ENCODE measurements at regions of chr22 and their contacts with region 1.

Region 1: GRCh38 chr22:35971456-35972119 is 57.0 kb downstream of the RBFOX2 start:
- DNase-seq: peak; percentile 96
- H3K4me3 ChIP-seq: peak overlapping the region; percentile 17
- H3K27ac ChIP-seq: peak overlapping the region; percentile 93
- H3K4me1 ChIP-seq: peaks cover 93% of the 10 kb centered on the region
- H3K27me3 ChIP-seq: no peaks in the 10 kb centered on the region
- CTCF ChIP-seq: no peak

Region 2: DNA sequence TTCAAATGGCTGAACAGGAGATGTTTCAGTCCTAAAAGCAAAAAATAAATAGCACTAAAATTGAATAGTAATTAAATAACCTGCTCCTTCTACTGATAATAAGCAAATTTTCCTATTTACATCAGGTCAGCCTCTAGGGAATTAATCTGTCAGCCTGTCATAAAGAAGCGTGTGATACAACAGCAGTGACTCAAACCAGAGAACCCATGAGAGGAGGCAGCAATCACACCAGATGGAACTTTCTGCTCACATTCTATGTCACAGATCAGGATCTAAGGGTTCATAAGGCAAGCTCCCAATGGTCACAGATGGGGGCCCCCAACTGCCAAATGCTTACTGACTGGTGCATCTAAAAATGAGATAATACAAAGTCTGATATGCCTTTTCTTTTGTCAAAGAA is 15.9 kb after region 1 on chr22:
- CTCF ChIA-PET with region 1: interaction called, 11 read pairs
- POLR2A ChIA-PET with region 1: no interaction called
- intact Hi-C with region 1: no loop called
- DNase-seq: peak; percentile 62
- H3K4me3 ChIP-seq: no peak overlapping the region
- H3K27ac ChIP-seq: peak overlapping the region; percentile 73
- H3K4me1 ChIP-seq: peaks cover 64% of the 10 kb centered on the region
- H3K27me3 ChIP-seq: no peaks in the 10 kb centered on the region
- CTCF ChIP-seq: no peak

Region 3: GRCh38 chr22:36028646-36029405 is 57.2 kb after region 1 on chr22 and contains the start of gene RBFOX2:
- CTCF ChIA-PET with region 1: no interaction called
- POLR2A ChIA-PET with region 1: interaction called, 22 read pairs
- intact Hi-C with region 1: loop called (anchors 5 kb)
- DNase-seq: peak; percentile 97
- H3K4me3 ChIP-seq: peak within 1 kb of the TSS; percentile 89
- H3K27ac ChIP-seq: peak within 1 kb of the TSS; percentile 84
- H3K4me1 ChIP-seq: peaks cover 21% of the 10 kb centered on the region
- H3K27me3 ChIP-seq: no peaks in the 10 kb centered on the region
- CTCF ChIP-seq: no peak
- total RNA-seq, gene RBFOX2: 142 and 154 TPM in 2 replicates

Region 4: DNA sequence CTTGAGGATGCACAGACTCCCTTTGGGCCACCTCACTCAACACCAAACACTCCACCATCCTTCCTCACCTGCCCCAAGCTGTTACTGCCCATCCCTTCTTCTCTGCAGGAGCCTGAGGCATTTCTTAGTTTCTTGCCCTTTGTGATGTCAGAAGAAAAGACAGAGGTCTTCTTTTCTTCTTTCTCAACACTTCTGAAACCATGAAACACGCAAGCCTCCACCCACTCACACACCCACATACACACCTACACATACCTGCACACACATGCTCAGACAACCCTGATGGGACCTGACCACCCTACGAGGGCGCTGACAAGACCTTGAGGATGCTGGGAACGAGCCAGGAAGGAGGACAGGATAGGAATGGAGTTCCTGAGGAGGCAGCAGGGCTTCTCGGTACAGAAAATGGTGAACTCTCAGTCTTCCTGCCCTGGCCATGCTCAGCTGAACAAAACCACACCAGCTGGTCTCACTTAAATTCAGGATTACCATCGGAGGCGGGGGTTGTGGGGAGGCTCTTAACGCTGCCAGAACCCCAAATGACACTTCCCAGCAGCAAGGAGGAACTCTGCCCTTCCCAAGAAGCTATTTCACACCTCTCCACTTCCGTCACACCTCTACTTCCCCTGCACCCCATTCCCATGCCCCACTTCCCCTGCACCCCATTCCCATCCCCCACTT is 982.8 kb after region 1 on chr22:
- CTCF ChIA-PET with region 1: no interaction called
- POLR2A ChIA-PET with region 1: no interaction called
- intact Hi-C with region 1: no loop called
- DNase-seq: no peak
- H3K4me3 ChIP-seq: no peak overlapping the region
- H3K27ac ChIP-seq: no peak overlapping the region
- H3K4me1 ChIP-seq: no peaks in the 10 kb centered on the region
- H3K27me3 ChIP-seq: no peaks in the 10 kb centered on the region
- CTCF ChIP-seq: no peak

Measured in A673 (cell line).